Left cardiac atrium (tissue), 4 donors: ENCODE measurements at regions of chr7 and their contacts with region 1.

Region 1: GRCh38 chr7:36152756-36153570 is at the start of gene EEPD1:
- DNase-seq: peak; percentile 100
- ATAC-seq: peak; percentile 96 to 98
- total RNA-seq, gene EEPD1: 5.2 to 10.8 TPM

Region 2: GRCh38 chr7:36037121-36037662 is 115.8 kb before region 1 on chr7:
- intact Hi-C with region 1: loop called in 1 of 2 experiments (anchors 10 kb)
- DNase-seq: peak; percentile 63
- ATAC-seq: peak; percentile 70 to 73

Region 3: GRCh38 chr7:36280840-36281812 is 128.2 kb after region 1 on chr7:
- intact Hi-C with region 1: loop called in 1 of 2 experiments (anchors 10 kb)
- DNase-seq: peak; percentile 71
- ATAC-seq: peak; percentile 79 to 92